ENCODE measurements at regions of chr5 and their contacts with region 1.

Region 1: GRCh38 chr5:175824676-175825075 is 46.7 kb upstream of the CPLX2 start:
- DNase-seq: no peak

Region 2: GRCh38 chr5:175107028-175107588 is 717.6 kb before region 1 on chr5:
- intact Hi-C with region 1: no loop called
- DNase-seq: no peak

Region 3: DNA sequence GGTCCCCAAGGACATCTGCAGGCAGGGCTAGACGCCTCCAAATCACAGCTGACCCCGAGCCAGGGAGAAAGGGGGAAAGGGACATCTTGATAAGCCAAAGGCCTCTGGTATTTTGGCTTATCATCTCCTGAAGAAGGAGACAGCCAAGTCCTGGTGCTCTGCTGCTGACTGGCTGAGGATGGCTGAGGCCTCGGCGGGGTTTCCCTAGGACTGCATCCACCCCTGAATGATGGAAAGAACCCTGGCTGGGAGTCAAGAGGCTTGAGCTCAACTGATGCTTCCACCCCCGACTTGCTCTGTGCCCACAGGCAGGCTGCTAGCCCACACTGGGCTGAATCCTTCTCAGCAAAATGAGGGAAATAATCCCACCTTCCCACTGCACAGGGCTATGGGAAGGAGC is 197.7 kb before region 1 on chr5:
- intact Hi-C with region 1: no loop called
- DNase-seq: no peak

Region 4: DNA sequence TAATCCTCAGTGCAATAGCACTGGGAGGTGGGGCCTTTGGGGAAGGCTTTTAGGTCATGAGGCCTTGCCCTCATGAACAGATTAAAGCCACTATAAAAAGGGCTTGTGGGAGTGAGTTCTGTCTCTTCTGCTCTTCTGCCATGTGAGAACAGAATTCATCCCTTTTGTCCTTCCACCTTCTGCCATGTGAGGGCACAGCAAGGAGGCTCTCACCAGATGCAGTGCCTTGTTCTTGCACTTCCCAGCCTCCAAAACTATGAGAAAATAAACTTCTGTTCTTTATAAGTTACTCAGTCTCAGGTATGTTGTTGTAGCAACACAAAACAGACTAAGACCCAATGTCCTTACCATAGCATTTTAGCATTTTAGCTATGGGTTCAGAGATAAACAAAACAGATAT is 35.0 kb before region 1 on chr5:
- intact Hi-C with region 1: no loop called
- DNase-seq: no peak

Region 5: DNA sequence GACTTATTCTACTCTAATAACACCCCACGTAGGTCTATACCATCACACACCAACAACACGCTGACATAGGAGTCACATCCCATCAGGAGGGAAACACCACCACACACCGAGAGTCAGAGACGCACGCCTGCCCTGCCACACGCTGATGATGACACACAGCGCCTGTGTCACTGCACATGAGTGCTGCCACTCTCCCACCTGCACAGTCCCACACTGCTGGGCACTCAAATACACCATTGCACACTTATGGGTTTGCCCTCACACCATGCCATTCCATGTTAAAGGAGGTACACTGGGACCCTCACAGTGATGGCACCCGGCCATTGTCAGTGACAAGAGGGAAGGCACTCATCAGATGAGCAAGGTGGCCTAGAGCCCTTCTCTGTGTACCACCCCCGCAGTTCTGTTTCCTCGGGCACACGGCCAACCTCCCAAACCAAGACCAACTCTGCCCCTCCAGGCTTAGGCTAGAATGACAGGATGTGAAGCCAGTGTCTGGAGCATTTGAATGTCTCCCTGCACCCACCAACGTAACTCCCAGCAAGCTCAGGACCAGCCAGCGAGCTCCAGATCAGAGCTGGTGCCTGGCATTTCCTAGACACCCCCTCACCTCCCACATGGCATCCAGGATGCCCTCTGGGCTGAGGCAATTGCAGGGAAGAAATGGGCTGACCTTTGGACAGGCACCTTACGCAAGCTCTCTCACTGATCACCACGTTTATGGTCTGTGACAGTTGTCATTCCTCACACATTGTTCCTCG is 43.1 kb after region 1 on chr5:
- intact Hi-C with region 1: loop called in 1 of 2 experiments (anchors 5 kb)
- DNase-seq: peak; percentile 62